ENCODE measurements at regions of chr10 and their contacts with region 1.

Region 1: GRCh38 chr10:118698421-118698820 is 56.3 kb downstream of the CACUL1 start:
- DNase-seq: peak; percentile 79 to 94 (median 83)
- H3K4me3 ChIP-seq: peak overlapping the region in 1 of 2 donors; percentile 32
- H3K4me3 Mint-ChIP-seq: peak overlapping the region; percentile 69 to 86 (median 78)
- H3K27ac ChIP-seq: peak overlapping the region; percentile 20
- H3K27ac Mint-ChIP-seq: peak overlapping the region; percentile 59 to 91 (median 83)
- H3K4me1 ChIP-seq: peaks cover 24% of the 10 kb centered on the region
- H3K4me1 Mint-ChIP-seq: peaks cover 16 to 50% (median 38%) of the 10 kb centered on the region in 4 donors
- H3K27me3 ChIP-seq: no peaks in the 10 kb centered on the region
- H3K27me3 Mint-ChIP-seq: no peaks in the 10 kb centered on the region

Region 2: DNA sequence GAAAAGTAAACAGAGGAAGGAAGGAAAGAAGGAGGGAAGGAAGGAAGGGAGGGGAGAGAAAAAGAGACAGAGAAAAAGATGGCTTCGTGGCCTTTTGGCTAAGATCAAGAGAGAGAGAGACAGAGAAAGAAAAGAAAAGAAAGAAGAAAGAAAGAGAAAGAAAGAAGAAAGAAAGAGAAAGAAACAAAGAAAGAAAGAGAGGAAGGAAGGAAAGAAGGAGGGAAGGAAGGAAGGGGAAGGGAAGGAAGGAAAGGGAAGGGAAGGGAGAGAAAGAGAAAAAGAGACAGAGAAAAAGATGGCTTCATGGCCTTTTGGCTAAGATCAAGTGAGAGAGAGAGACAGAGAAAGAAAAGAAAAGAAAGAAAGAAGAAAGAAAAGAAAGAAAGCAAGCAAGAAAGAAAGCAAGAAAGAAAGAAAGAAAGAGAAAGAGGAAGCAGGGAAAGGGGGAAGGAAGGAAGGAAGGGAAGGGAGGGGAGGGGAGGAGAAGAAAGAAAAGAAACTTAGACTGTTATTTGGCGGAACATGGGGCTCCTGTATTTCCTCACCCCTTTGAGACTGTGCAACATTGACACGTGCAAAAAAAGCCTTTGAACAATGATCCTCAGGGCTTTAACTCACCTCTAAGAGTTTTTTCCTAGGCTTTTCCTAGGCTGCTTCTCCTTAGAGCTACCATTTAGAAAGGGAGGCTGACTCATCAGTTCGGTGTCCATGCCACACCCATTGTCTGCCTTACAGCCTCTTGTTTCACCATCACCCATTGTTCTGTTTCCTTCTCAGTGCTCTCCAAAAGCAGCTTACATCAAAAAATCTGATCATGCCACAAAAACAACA is 194.2 kb before region 1 on chr10:
- CTCF ChIA-PET with region 1: no interaction called
- POLR2A ChIA-PET with region 1: no interaction called
- intact Hi-C with region 1: no loop called
- DNase-seq: no peak
- H3K4me3 ChIP-seq: no peak overlapping the region
- H3K4me3 Mint-ChIP-seq: peak overlapping the region in 1 of 8 donors; percentile 6
- H3K27ac ChIP-seq: no peak overlapping the region
- H3K27ac Mint-ChIP-seq: no peak overlapping the region
- H3K4me1 ChIP-seq: no peaks in the 10 kb centered on the region
- H3K4me1 Mint-ChIP-seq: peaks cover 0 to 6% (median 2%) of the 10 kb centered on the region in 4 donors
- H3K27me3 ChIP-seq: no peaks in the 10 kb centered on the region
- H3K27me3 Mint-ChIP-seq: peaks cover 2 to 7% of the 10 kb centered on the region in 2 donors

Region 3: GRCh38 chr10:118658762-118659161 is 39.7 kb before region 1 on chr10:
- CTCF ChIA-PET with region 1: interaction called, 4 read pairs
- POLR2A ChIA-PET with region 1: interaction called, 9 read pairs
- intact Hi-C with region 1: loop called (anchors 1 kb)
- DNase-seq: no peak
- H3K4me3 ChIP-seq: peak overlapping the region in 1 of 2 donors; percentile 28
- H3K4me3 Mint-ChIP-seq: peak overlapping the region in 7 of 8 donors; percentile 48 to 80 (median 59)
- H3K27ac ChIP-seq: peak overlapping the region; percentile 26
- H3K27ac Mint-ChIP-seq: peak overlapping the region; percentile 19 to 85 (median 71)
- H3K4me1 ChIP-seq: peaks cover 60% of the 10 kb centered on the region
- H3K4me1 Mint-ChIP-seq: peaks cover 54 to 81% (median 73%) of the 10 kb centered on the region in 4 donors
- H3K27me3 ChIP-seq: no peaks in the 10 kb centered on the region
- H3K27me3 Mint-ChIP-seq: peaks cover 2% of the 10 kb centered on the region in 2 donors

Region 4: GRCh38 chr10:118732245-118733165 is 34.1 kb after region 1 on chr10:
- CTCF ChIA-PET with region 1: no interaction called
- POLR2A ChIA-PET with region 1: no interaction called
- intact Hi-C with region 1: loop called (anchors 2 kb)
- DNase-seq: peak in 4 of 5 donors; percentile 36 to 49 (median 38)
- H3K4me3 ChIP-seq: no peak overlapping the region
- H3K4me3 Mint-ChIP-seq: peak overlapping the region; percentile 50 to 85 (median 74)
- H3K27ac ChIP-seq: peak overlapping the region; percentile 12
- H3K27ac Mint-ChIP-seq: peak overlapping the region; percentile 75 to 88 (median 80)
- H3K4me1 ChIP-seq: peaks cover 77% of the 10 kb centered on the region
- H3K4me1 Mint-ChIP-seq: peaks cover 63 to 90% (median 74%) of the 10 kb centered on the region in 4 donors
- H3K27me3 ChIP-seq: no peaks in the 10 kb centered on the region
- H3K27me3 Mint-ChIP-seq: no peaks in the 10 kb centered on the region

Region 5: GRCh38 chr10:118742782-118743181 is 44.4 kb after region 1 on chr10:
- CTCF ChIA-PET with region 1: no interaction called
- POLR2A ChIA-PET with region 1: no interaction called
- intact Hi-C with region 1: no loop called
- DNase-seq: no peak
- H3K4me3 ChIP-seq: no peak overlapping the region
- H3K4me3 Mint-ChIP-seq: no peak overlapping the region
- H3K27ac ChIP-seq: no peak overlapping the region
- H3K27ac Mint-ChIP-seq: peak overlapping the region in 4 of 7 donors; percentile 4 to 56 (median 36)
- H3K4me1 ChIP-seq: peaks cover 44% of the 10 kb centered on the region
- H3K4me1 Mint-ChIP-seq: peaks cover 46 to 87% (median 61%) of the 10 kb centered on the region in 4 donors
- H3K27me3 ChIP-seq: no peaks in the 10 kb centered on the region
- H3K27me3 Mint-ChIP-seq: no peaks in the 10 kb centered on the region

Measured in CD4-positive, alpha-beta memory T cell (primary cell).